Mammary epithelial cell (primary cell): ENCODE measurements at regions of chr12 and their contacts with region 1.

Region 1: GRCh38 chr12:6195665-6196535 is 4.3 kb upstream of the CD9 start:
- DNase-seq: peak; percentile 88
- H3K4me3 ChIP-seq: no peak overlapping the region
- H3K27ac ChIP-seq: peak overlapping the region; percentile 52
- H3K4me1 ChIP-seq: peaks cover 20% of the 10 kb centered on the region
- H3K27me3 ChIP-seq: no peaks in the 10 kb centered on the region
- CTCF ChIP-seq: peak; percentile 82 to 93

Region 2: GRCh38 chr12:6056406-6057240 is 139.3 kb before region 1 on chr12:
- CTCF ChIA-PET with region 1: no interaction called
- dilution Hi-C with region 1: loop called (anchors 5 kb)
- in situ Hi-C with region 1: loop called (anchors 10 kb)
- intact Hi-C with region 1: no loop called
- DNase-seq: no peak
- H3K4me3 ChIP-seq: no peak overlapping the region
- H3K27ac ChIP-seq: no peak overlapping the region
- H3K4me1 ChIP-seq: peaks cover 4% of the 10 kb centered on the region
- H3K27me3 ChIP-seq: peaks cover 4% of the 10 kb centered on the region
- CTCF ChIP-seq: peak in 1 of 2 donors; percentile 25

Region 3: DNA sequence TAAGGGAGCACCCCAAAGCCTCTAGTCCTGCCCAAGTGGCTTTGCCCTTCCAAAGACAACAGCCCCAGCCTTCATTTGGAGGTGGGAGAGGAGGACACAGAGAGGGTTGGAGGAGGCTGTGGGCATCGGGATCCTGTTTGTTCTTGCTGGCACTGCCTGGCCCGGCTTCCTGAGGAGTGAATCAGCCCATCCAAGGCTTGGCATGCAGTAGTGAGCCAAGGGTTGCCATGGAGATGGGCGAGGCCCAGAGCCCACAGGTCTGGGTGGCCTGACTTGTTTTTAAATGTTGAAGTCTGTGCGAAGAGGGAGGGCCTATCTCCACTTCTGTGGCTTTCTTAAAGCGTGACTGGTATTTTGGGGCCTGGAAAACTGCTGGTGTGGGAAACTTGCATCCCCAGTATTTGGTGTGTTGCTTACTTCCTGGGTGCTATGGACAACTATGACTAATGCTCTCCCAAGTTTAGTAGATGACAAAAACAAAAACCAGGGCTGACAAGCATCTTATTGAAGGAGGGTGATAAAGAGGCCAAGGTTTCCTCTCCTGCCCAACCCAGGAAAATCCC is 20.1 kb after region 1 on chr12:
- CTCF ChIA-PET with region 1: interaction called, 3 read pairs
- dilution Hi-C with region 1: no loop called
- in situ Hi-C with region 1: no loop called
- intact Hi-C with region 1: loop called (anchors 1 kb)
- DNase-seq: peak; percentile 100
- H3K4me3 ChIP-seq: peak overlapping the region in 1 of 3 experiments; percentile 1
- H3K27ac ChIP-seq: peak overlapping the region; percentile 100
- H3K4me1 ChIP-seq: peaks cover 77% of the 10 kb centered on the region
- H3K27me3 ChIP-seq: no peaks in the 10 kb centered on the region
- CTCF ChIP-seq: no peak

Region 4: GRCh38 chr12:6272300-6273204 is 76.7 kb after region 1 on chr12:
- CTCF ChIA-PET with region 1: interaction called, 7 read pairs
- dilution Hi-C with region 1: loop called (anchors 5 kb)
- in situ Hi-C with region 1: loop called in 1 of 2 experiments (anchors 5 kb)
- intact Hi-C with region 1: no loop called
- DNase-seq: peak; percentile 99
- H3K4me3 ChIP-seq: peak overlapping the region in 2 of 3 experiments; percentile 10 to 21
- H3K27ac ChIP-seq: peak overlapping the region; percentile 96
- H3K4me1 ChIP-seq: peaks cover 43% of the 10 kb centered on the region
- H3K27me3 ChIP-seq: no peaks in the 10 kb centered on the region
- CTCF ChIP-seq: no peak